ENCODE measurements at regions of chr3 and their contacts with region 1.

Region 1: DNA sequence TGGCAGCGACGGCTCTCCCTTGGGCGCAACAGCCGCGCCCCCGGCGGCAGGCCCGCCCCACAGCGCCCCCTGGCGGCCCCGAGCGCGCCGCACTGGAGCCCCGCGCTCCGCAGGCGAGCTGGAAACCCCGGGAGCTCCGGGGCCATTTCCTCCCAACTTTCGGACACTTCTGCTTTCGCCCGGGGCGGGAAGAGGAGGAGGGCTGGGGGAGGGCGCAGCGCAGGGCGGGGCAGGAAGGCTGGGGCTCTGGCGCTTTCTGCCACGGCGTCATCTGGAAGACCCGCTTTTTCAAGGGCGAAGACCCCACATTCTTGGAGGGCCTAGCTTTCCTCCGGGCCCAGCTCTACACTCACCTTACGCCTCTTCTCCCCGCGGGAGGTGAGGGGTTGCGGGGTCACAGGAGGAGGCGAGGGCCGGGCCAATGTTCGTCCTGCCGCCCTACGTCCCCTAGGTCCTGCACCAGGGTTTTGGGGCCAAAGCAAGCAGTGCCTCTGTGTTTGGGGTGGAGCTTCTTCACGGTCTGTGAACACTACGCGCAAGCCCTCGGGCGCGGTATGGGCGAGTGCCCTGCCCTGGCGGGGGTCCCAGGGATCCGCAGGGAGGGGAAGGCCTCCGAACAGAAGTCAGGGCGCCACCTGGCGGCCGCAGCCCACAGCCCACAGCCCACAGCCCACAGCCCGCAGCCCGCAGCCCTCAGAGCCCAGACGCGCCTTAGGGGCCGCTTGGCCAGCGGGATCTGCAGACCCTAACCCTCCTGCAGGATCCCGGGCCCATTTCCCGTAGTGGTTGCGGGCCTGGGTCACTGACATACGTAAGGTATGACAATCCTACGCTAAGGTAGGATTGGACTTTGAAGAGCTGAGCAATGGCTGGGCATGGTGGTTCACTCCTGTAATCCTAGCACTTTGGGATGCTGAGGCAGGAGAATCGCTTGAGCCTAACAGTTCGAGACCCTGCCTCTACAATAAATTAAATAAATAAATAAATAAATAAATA is 31.1 kb downstream of the FOXL2 start:
- DNase-seq: peak; percentile 97
- ATAC-seq: peak; percentile 92
- H3K4me3 Mint-ChIP-seq: peak overlapping the region; percentile 66
- H3K27ac Mint-ChIP-seq: 0 out of 2 replicates have a peak overlapping the region, but pooled peaks have one; percentile 65
- H3K4me1 Mint-ChIP-seq: peaks cover 3% of the 10 kb centered on the region
- H3K27me3 Mint-ChIP-seq: peaks cover 10% of the 10 kb centered on the region
- CTCF ChIP-seq: peak; percentile 93

Region 2: DNA sequence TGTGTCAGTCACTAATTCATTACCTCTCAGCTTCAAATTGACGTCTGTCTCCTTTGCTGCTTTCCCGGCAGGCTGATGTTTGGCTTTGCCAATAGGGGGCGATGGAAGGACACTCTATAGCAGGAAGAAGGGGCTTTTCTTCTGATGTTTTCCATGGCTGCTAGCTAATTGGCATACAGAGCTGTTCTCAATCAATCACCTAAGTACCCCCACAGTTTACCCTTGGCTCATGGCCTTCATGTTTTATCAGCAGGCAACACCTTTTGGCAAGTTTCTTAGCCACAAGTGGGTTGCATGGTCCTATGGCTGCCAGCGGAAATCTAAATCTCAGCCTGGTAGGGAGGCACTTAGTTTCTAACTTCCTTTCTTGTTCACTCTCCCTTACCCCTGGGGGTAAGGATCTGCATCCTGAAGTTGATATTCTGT is 436.4 kb before region 1 on chr3:
- CTCF ChIA-PET with region 1: interaction called, 58 read pairs
- POLR2A ChIA-PET with region 1: no interaction called
- DNase-seq: peak; percentile 71
- ATAC-seq: peak; percentile 91
- H3K4me3 Mint-ChIP-seq: no peak overlapping the region
- H3K27ac Mint-ChIP-seq: no peak overlapping the region
- H3K4me1 Mint-ChIP-seq: peaks cover 4% of the 10 kb centered on the region
- H3K27me3 Mint-ChIP-seq: no peaks in the 10 kb centered on the region; the same call in 1 of the 2 replicates
- CTCF ChIP-seq: peak; percentile 57

Region 3: GRCh38 chr3:138705675-138706074 is 210.1 kb before region 1 on chr3:
- CTCF ChIA-PET with region 1: interaction called, 152 read pairs
- POLR2A ChIA-PET with region 1: interaction called, 4 read pairs
- DNase-seq: no peak
- ATAC-seq: no peak
- H3K4me3 Mint-ChIP-seq: no peak overlapping the region
- H3K27ac Mint-ChIP-seq: no peak overlapping the region
- H3K4me1 Mint-ChIP-seq: no peaks in the 10 kb centered on the region
- H3K27me3 Mint-ChIP-seq: no peaks in the 10 kb centered on the region
- CTCF ChIP-seq: no peak

Region 4: DNA sequence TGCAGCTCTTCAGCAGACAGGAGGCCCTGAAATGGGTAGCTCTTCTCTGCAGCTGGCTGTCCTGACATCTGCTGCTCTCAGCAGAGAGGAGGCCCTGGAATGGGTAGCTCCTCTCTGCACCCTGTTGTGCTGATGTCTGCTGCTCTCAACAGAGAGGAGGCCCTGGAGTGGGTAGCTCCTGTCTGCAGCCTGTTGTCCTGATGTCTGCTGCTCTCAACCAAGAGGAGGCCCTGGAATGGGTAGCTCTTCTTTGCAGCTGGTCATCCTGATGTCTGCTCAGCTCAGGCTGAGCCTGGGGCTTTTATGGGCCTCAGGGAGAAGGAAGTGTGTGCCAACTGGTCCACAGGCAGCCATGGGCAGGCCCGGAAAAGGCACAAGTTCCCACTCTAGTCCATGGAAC is 147.7 kb before region 1 on chr3:
- CTCF ChIA-PET with region 1: interaction called, 11 read pairs
- POLR2A ChIA-PET with region 1: no interaction called
- DNase-seq: no peak
- ATAC-seq: no peak
- H3K4me3 Mint-ChIP-seq: no peak overlapping the region
- H3K27ac Mint-ChIP-seq: no peak overlapping the region
- H3K4me1 Mint-ChIP-seq: no peaks in the 10 kb centered on the region
- H3K27me3 Mint-ChIP-seq: no peaks in the 10 kb centered on the region
- CTCF ChIP-seq: no peak

Region 5: GRCh38 chr3:138824114-138824506 is 91.7 kb before region 1 on chr3:
- CTCF ChIA-PET with region 1: interaction called, 27 read pairs
- POLR2A ChIA-PET with region 1: no interaction called
- DNase-seq: no peak
- ATAC-seq: peak; percentile 76
- H3K4me3 Mint-ChIP-seq: 0 out of 2 replicates have a peak overlapping the region, but pooled peaks have one; percentile 19
- H3K27ac Mint-ChIP-seq: peak overlapping the region; percentile 95
- H3K4me1 Mint-ChIP-seq: peaks cover 17% of the 10 kb centered on the region
- H3K27me3 Mint-ChIP-seq: no peaks in the 10 kb centered on the region
- CTCF ChIP-seq: no peak

Region 6: DNA sequence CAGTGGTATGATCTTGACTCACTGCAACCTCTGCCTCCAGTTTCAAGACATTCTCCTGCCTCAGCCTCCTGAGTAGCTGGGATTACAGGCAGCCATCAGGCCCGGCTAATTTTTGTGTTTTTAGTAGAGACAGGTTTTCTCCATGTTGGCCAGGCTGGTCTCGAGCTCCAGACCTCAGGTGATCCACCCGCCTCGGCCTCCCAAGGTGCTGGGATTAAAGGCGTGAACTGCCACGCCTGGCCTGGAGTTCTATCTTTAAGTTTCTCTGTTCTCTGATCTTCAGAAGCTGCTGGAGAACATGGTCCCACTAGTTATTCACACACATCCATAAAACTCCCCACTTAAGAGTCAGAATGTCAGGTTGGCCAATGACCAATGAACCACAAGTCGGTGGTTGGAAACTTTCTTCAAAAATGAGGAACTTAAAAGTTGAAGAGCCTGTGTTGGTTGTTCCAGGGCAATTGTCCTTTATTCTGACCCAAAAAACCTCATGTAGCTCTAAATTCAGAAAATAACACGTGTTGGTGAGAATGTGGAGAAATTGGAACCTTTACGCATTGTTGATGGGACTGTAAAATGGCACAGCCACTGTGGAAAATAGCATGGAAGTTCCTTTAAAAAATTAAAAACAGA is 25.1 kb before region 1 on chr3:
- CTCF ChIA-PET with region 1: interaction called, 14 read pairs
- POLR2A ChIA-PET with region 1: no interaction called
- DNase-seq: no peak
- ATAC-seq: no peak
- H3K4me3 Mint-ChIP-seq: no peak overlapping the region
- H3K27ac Mint-ChIP-seq: no peak overlapping the region
- H3K4me1 Mint-ChIP-seq: no peaks in the 10 kb centered on the region
- H3K27me3 Mint-ChIP-seq: no peaks in the 10 kb centered on the region
- CTCF ChIP-seq: no peak